HEK293 (cell line): ENCODE measurements at regions of chr12 and their contacts with region 1.

Region 1: DNA sequence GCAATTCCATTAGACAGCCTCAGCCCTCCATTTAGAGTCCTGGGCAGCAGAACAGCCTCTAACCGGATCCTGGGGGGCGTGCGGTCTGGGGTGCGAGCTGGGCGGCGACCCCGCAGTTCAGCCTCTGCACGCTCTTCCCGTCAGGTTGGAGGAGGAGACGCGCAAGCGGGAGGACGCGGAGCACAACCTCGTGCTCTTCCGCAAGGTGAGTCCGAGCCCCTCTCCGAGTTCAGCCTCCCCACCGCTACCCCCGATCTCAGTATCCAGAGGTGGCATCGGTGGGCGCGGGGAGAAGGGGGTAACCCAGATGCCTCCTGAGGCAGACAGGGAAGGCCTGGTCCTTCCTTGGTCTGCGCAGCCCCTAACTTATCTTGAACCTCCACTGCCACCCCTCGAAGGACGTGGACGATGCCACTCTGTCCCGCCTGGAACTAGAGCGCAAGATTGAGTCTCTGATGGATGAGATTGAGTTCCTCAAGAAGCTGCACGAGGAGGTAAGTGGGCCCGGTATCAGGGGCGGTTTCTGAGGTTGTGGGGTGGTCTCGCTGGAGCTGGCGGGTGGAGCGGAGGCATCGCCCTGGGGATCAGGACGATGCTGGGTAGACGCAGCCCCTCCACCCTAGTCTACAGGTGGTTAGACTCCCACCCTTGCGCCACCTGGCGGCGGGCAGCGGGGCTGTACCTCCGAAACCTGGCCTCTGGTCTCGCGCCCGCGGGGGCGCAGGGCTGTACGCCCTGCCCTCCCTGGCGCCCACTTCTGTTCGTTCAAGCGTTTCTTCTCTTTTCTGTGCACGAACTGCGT is 1.3 kb downstream of the PRPH start:
- H3K4me3 ChIP-seq: peak overlapping the region; percentile 57
- H3K27ac ChIP-seq: peak overlapping the region; percentile 55; the same call in 1 of the 2 replicates
- H3K4me1 ChIP-seq: peaks cover 8% of the 10 kb centered on the region
- CTCF ChIP-seq: peak; percentile 98

Region 2: DNA sequence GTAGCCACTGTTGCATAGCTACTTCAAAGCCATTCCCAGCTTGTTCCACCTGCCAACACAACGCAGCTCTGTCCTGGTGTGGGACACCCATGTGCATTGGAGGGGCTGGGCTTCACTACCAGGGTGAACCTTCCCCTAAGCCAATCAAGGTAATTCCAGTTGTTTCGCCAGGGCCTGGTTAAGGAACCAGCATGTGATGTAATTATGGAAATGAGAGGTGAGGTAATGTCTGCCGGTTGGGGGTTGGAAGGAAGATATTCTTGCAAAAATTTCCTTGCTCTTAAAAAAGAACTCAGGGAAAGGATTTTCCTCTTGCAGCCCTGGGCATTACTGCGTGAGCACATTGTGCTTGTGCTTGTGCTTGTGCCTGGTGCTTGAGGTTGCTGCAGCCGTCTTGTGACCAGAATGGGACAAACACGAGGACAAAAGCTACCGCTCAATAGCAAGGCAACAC is 16.5 kb before region 1 on chr12:
- CTCF ChIA-PET with region 1: interaction called, 208 read pairs
- POLR2A ChIA-PET with region 1: interaction called, 16 read pairs
- H3K4me3 ChIP-seq: no peak overlapping the region
- H3K27ac ChIP-seq: peak overlapping the region; percentile 65
- H3K4me1 ChIP-seq: peaks cover 4% of the 10 kb centered on the region; the same call in 1 of the 2 replicates
- CTCF ChIP-seq: no peak

Region 3: GRCh38 chr12:49322708-49323523 is 26.7 kb after region 1 on chr12 and contains the start of gene TROAP:
- CTCF ChIA-PET with region 1: interaction called, 43 read pairs
- POLR2A ChIA-PET with region 1: interaction called, 94 read pairs
- H3K4me3 ChIP-seq: peak within 1 kb of the TSS; percentile 73
- H3K27ac ChIP-seq: peak within 1 kb of the TSS; percentile 46
- H3K4me1 ChIP-seq: 0 out of 2 replicates have a peak, but pooled peaks cover 4% of the 10 kb centered on the region
- CTCF ChIP-seq: no peak

Region 4: GRCh38 chr12:49347384-49348237 is 51.4 kb after region 1 on chr12:
- CTCF ChIA-PET with region 1: interaction called, 79 read pairs
- POLR2A ChIA-PET with region 1: interaction called, 17 read pairs
- H3K4me3 ChIP-seq: peak overlapping the region; percentile 32
- H3K27ac ChIP-seq: peak overlapping the region; percentile 80; the same call in 1 of the 2 replicates
- H3K4me1 ChIP-seq: peaks cover 21% of the 10 kb centered on the region
- CTCF ChIP-seq: peak; percentile 97

Region 5: DNA sequence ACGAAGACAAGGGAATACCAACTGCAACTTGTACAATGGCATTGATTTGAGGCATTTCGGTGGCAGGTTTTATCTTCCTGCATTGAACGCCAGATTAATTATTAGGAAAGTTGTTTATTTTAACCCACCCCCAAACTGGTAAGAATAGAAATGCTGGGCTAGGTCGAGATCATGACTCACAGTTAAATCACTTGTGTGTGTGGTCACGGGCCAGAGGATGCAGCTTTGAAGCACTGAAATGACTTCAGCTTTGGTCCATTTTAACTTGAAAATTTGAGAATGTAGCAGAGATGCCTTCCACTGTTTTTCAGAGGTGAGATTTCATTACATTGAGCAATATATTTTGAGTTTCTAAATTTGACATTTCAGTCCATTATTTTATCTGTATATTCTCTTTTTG is 219.0 kb after region 1 on chr12:
- CTCF ChIA-PET with region 1: interaction called, 13 read pairs
- POLR2A ChIA-PET with region 1: no interaction called
- H3K4me3 ChIP-seq: no peak overlapping the region
- H3K27ac ChIP-seq: no peak overlapping the region
- H3K4me1 ChIP-seq: peaks cover 5% of the 10 kb centered on the region
- CTCF ChIP-seq: no peak

Region 6: GRCh38 chr12:49604856-49605255 is 308.6 kb after region 1 on chr12:
- CTCF ChIA-PET with region 1: no interaction called
- POLR2A ChIA-PET with region 1: no interaction called
- H3K4me3 ChIP-seq: no peak overlapping the region
- H3K27ac ChIP-seq: no peak overlapping the region
- H3K4me1 ChIP-seq: peaks cover 2% of the 10 kb centered on the region; the same call in 1 of the 2 replicates
- CTCF ChIP-seq: no peak

Region 7: GRCh38 chr12:49809381-49809905 is 513.2 kb after region 1 on chr12:
- CTCF ChIA-PET with region 1: no interaction called
- POLR2A ChIA-PET with region 1: no interaction called
- H3K4me3 ChIP-seq: no peak overlapping the region
- H3K27ac ChIP-seq: no peak overlapping the region
- H3K4me1 ChIP-seq: no peaks in the 10 kb centered on the region
- CTCF ChIP-seq: no peak